GM12878 (cell line): ENCODE measurements at regions of chr4 and their contacts with region 1.

Region 1: GRCh38 chr4:88275516-88275915 is 8.8 kb downstream of the PPM1K start:
- DNase-seq: no peak
- ATAC-seq: peak; percentile 65
- H3K4me3 ChIP-seq: peak overlapping the region; percentile 53
- H3K27ac ChIP-seq: peak overlapping the region; percentile 1; the same call in 1 of the 2 replicates
- H3K4me1 ChIP-seq: peaks cover 39% of the 10 kb centered on the region
- H3K27me3 ChIP-seq: no peaks in the 10 kb centered on the region
- CTCF ChIP-seq: no peak
- EP300 ChIP-seq: no peak
- POLR2A ChIP-seq: no peak
- RAD21 ChIP-seq: no peak

Region 2: GRCh38 chr4:88257726-88258125 is 17.8 kb before region 1 on chr4:
- CTCF ChIA-PET with region 1: no interaction called
- POLR2A ChIA-PET with region 1: interaction called, 5 read pairs
- RAD21 ChIA-PET with region 1: interaction called, 3 read pairs
- SMC1A ChIA-PET with region 1: interaction called, 13 read pairs
- in situ Hi-C with region 1: no loop called
- intact Hi-C with region 1: no loop called
- DNase-seq: no peak
- ATAC-seq: no peak
- H3K4me3 ChIP-seq: no peak overlapping the region
- H3K27ac ChIP-seq: no peak overlapping the region
- H3K4me1 ChIP-seq: no peaks in the 10 kb centered on the region
- H3K27me3 ChIP-seq: no peaks in the 10 kb centered on the region
- CTCF ChIP-seq: no peak
- EP300 ChIP-seq: no peak
- POLR2A ChIP-seq: no peak
- RAD21 ChIP-seq: no peak

Region 3: DNA sequence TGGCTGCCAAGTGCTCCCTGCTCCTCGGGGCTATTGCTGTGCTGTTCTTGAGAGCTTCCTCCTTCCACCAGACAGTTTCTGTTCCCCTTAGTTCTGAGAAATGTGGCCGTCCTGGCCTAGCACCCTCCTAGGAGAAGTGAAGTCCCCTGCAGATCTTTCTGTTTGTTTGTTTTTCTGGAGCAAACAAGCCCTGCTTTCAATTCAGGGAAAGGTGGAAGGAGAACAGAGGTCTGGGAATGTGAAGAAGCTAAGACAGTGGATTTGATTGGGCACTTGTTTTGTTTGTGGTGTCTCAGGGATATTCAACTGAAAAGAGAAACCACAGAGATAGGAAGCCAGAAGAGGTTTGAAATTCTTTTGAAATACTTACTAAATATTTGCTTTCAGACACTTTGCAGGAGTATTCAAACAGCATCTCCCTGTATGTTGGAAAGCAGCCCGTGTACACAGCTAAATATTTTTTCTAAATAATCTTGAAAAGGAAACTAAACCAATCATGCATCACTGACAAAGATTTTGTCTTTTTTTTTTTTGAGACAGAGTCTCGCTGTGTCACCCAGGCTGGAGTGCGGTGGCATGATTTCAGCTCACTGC is 45.4 kb after region 1 on chr4:
- CTCF ChIA-PET with region 1: interaction called, 4 read pairs
- POLR2A ChIA-PET with region 1: interaction called, 7 read pairs
- RAD21 ChIA-PET with region 1: interaction called, 27 read pairs
- SMC1A ChIA-PET with region 1: interaction called, 112 read pairs
- in situ Hi-C with region 1: no loop called
- intact Hi-C with region 1: no loop called
- DNase-seq: peak; percentile 83
- ATAC-seq: peak; percentile 100
- H3K4me3 ChIP-seq: peak overlapping the region; percentile 53
- H3K27ac ChIP-seq: peak overlapping the region; percentile 93
- H3K4me1 ChIP-seq: peaks cover 17% of the 10 kb centered on the region
- H3K27me3 ChIP-seq: no peaks in the 10 kb centered on the region
- CTCF ChIP-seq: no peak
- EP300 ChIP-seq: peak in 1 of 2 experiments; percentile 80; a peak in 2 of 4 replicates
- POLR2A ChIP-seq: peak; percentile 49
- RAD21 ChIP-seq: no peak